ENCODE measurements at regions of chr14 and their contacts with region 1.

Region 1: DNA sequence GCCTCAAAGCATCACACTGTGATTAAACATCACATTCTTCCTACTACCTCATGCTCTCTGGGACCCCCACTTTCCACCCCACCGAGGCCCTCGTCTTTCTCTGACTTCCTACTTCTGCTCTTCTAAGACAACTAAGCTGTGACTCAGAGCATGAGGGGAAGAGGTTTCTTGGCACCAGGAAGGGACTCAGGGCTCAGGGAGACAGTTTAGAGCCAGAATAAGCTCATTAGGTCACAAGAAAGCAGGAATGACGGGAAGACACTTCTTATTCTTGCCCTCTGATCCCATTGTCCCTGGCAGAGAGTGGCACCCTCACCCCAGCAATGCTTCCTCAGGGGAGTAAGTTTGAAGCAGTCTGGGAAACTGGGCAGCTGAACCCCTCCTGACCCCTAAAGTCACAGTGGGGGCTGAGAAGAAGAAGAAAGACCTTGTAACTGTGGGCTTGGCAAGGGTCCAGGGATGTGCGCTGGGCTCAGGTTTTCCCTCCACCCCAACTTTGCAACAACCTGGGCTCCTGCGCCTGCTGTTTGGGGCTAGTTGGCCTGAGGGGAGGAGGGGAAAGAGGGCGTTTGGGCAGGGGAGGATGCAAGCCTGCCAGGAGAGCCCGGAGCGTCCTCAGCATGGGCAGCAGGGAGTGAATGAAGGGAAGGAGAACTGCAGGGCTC is 64.6 kb upstream of the ACTN1 start:
- DNase-seq: no peak
- ATAC-seq: peak; percentile 65
- H3K4me3 ChIP-seq: no peak overlapping the region
- H3K4me3 Mint-ChIP-seq: no peak overlapping the region
- H3K27ac ChIP-seq: no peak overlapping the region
- H3K27ac Mint-ChIP-seq: peak overlapping the region in 1 of 9 donors; percentile 91
- H3K4me1 ChIP-seq: no peaks in the 10 kb centered on the region
- H3K4me1 Mint-ChIP-seq: peaks cover 3 to 26% (median 13%) of the 10 kb centered on the region in 7 donors
- H3K27me3 ChIP-seq: no peaks in the 10 kb centered on the region
- H3K27me3 Mint-ChIP-seq: peaks cover 6 to 50% (median 10%) of the 10 kb centered on the region in 5 donors

Region 2: GRCh38 chr14:68377459-68377858 is 666.3 kb before region 1 on chr14:
- CTCF ChIA-PET with region 1: no interaction called
- POLR2A ChIA-PET with region 1: interaction called, 10 read pairs
- intact Hi-C with region 1: no loop called
- DNase-seq: no peak
- ATAC-seq: peak; percentile 62
- H3K4me3 ChIP-seq: no peak overlapping the region
- H3K4me3 Mint-ChIP-seq: peak overlapping the region in 7 of 10 donors; percentile 29 to 72 (median 59)
- H3K27ac ChIP-seq: peak overlapping the region; percentile 37
- H3K27ac Mint-ChIP-seq: peak overlapping the region in 7 of 9 donors; percentile 69 to 89 (median 81)
- H3K4me1 ChIP-seq: peaks cover 0 to 38% of the 10 kb centered on the region in 2 donors
- H3K4me1 Mint-ChIP-seq: peaks cover 30 to 84% (median 72%) of the 10 kb centered on the region in 7 donors
- H3K27me3 ChIP-seq: no peaks in the 10 kb centered on the region
- H3K27me3 Mint-ChIP-seq: no peaks in the 10 kb centered on the region

Region 3: DNA sequence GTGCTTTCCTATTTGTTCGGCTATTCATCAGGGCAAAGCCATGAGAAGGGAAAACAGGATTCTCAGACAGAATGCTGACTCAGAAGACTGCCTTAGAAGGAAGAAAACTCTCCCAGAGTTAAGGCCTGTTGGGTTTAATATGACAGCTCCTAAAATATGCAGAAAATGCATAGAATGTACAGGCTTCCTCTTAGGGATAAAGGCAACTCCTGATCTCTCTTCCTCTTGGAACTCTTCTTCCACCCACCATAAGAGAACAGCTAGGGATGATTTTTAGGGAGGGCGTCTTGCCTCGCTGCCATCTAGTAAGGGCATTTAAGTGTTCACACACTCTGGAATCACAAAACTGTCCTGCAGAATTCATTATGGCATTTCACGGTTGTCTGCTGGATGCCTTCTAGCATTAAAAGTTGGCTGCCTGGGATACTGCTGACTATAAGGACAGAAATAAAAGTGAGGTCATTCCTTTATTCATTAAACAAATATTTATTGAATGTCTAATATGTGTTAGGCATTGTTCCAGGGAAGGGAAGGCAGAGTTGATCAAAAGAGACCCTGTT is 35.5 kb after region 1 on chr14:
- CTCF ChIA-PET with region 1: no interaction called
- POLR2A ChIA-PET with region 1: no interaction called
- intact Hi-C with region 1: loop called in 1 of 2 experiments (anchors 5 kb)
- DNase-seq: no peak
- ATAC-seq: no peak
- H3K4me3 ChIP-seq: no peak overlapping the region
- H3K4me3 Mint-ChIP-seq: no peak overlapping the region
- H3K27ac ChIP-seq: no peak overlapping the region
- H3K27ac Mint-ChIP-seq: peak overlapping the region in 3 of 9 donors; percentile 8 to 43 (median 9)
- H3K4me1 ChIP-seq: no peaks in the 10 kb centered on the region
- H3K4me1 Mint-ChIP-seq: peaks cover 0 to 26% (median 21%) of the 10 kb centered on the region in 7 donors
- H3K27me3 ChIP-seq: no peaks in the 10 kb centered on the region
- H3K27me3 Mint-ChIP-seq: no peaks in the 10 kb centered on the region

Region 4: DNA sequence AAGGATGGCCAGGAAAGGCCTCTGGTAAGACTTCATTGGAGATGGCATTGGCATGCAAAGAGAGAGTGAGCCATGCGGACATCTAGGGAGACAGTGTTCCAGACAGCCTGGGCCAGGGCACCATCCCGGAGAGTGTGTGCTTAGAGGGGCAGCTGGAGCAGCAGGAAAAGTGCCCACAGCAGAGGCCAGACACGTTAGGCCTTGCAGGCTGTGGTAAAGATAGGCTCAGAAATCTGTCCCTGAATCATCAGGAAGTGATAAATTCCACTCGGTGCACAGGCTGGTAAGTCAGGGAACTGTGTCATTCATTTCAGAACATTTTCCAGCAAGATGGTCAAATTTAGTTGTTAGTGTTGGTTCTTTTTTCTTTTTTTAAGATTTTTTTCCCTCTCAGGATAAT is 225.0 kb after region 1 on chr14:
- CTCF ChIA-PET with region 1: no interaction called
- POLR2A ChIA-PET with region 1: no interaction called
- intact Hi-C with region 1: no loop called
- DNase-seq: no peak
- ATAC-seq: no peak
- H3K4me3 ChIP-seq: no peak overlapping the region
- H3K4me3 Mint-ChIP-seq: no peak overlapping the region
- H3K27ac ChIP-seq: no peak overlapping the region
- H3K27ac Mint-ChIP-seq: no peak overlapping the region
- H3K4me1 ChIP-seq: no peaks in the 10 kb centered on the region
- H3K4me1 Mint-ChIP-seq: no peaks in the 10 kb centered on the region
- H3K27me3 ChIP-seq: no peaks in the 10 kb centered on the region
- H3K27me3 Mint-ChIP-seq: peaks cover 7 to 25% (median 10%) of the 10 kb centered on the region in 5 donors